A673 (cell line): ENCODE measurements at regions of chr3 and their contacts with region 1.

Region 1: DNA sequence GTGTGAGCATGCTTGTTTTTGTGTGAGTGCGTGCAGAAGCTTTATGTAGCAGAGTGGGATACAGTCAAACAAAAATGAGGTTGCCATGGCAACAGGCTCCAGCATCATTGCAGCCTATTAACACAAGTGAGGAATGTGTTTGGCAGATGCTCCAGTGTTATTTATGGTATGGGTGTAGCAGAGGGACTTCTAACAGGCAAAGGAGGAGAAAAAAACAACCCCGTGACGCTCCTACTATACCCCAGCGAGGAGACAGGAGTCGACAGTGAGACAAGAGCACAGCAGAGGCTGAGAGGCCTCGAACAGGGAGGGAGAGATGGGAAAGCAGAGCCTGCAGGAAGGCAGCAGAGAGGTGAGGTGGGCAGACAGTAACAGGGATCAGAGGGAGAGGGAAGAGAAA is 4.9 kb downstream of the ADCY5 start:
- DNase-seq: no peak
- H3K4me3 ChIP-seq: no peak overlapping the region
- H3K27ac ChIP-seq: no peak overlapping the region
- H3K4me1 ChIP-seq: no peaks in the 10 kb centered on the region
- H3K27me3 ChIP-seq: peaks cover 47% of the 10 kb centered on the region
- CTCF ChIP-seq: no peak

Region 2: DNA sequence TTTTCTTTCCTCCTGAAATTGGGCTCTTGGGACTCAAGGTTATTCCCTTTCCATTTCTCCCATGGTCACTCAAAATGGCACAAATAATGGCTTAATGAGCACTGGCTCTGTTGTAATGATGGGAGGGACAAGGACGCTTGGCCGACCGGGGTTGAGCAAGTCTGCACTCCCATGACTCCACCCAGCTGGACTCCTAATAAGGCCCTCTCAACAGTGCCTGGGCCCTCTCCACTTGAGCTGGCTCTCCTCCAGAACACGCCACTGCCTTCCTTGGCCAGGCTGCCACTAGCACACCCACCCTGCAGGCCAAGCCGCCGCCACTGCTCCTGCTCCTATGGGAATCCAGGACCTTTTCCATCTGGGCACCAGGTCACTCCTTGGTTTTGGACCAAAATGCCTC is 37.4 kb before region 1 on chr3:
- CTCF ChIA-PET with region 1: no interaction called
- POLR2A ChIA-PET with region 1: interaction called, 10 read pairs
- intact Hi-C with region 1: no loop called
- DNase-seq: no peak
- H3K4me3 ChIP-seq: no peak overlapping the region
- H3K27ac ChIP-seq: no peak overlapping the region
- H3K4me1 ChIP-seq: no peaks in the 10 kb centered on the region
- H3K27me3 ChIP-seq: no peaks in the 10 kb centered on the region
- CTCF ChIP-seq: no peak

Region 3: GRCh38 chr3:123499322-123499721 is 55.3 kb after region 1 on chr3:
- CTCF ChIA-PET with region 1: no interaction called
- POLR2A ChIA-PET with region 1: no interaction called
- intact Hi-C with region 1: no loop called
- DNase-seq: no peak
- H3K4me3 ChIP-seq: no peak overlapping the region
- H3K27ac ChIP-seq: no peak overlapping the region
- H3K4me1 ChIP-seq: no peaks in the 10 kb centered on the region
- H3K27me3 ChIP-seq: no peaks in the 10 kb centered on the region
- CTCF ChIP-seq: no peak